ENCODE measurements at regions of chr1 and their contacts with region 1.

Region 1: GRCh38 chr1:109017134-109017533 is 24.8 kb downstream of the WDR47 start:
- DNase-seq: no peak
- H3K4me3 ChIP-seq: no peak overlapping the region
- H3K27ac ChIP-seq: no peak overlapping the region
- H3K4me1 ChIP-seq: no peaks in the 10 kb centered on the region
- H3K27me3 ChIP-seq: no peaks in the 10 kb centered on the region
- CTCF ChIP-seq: no peak
- EP300 ChIP-seq: no peak
- POLR2A ChIP-seq: no peak
- RAD21 ChIP-seq: no peak

Region 2: DNA sequence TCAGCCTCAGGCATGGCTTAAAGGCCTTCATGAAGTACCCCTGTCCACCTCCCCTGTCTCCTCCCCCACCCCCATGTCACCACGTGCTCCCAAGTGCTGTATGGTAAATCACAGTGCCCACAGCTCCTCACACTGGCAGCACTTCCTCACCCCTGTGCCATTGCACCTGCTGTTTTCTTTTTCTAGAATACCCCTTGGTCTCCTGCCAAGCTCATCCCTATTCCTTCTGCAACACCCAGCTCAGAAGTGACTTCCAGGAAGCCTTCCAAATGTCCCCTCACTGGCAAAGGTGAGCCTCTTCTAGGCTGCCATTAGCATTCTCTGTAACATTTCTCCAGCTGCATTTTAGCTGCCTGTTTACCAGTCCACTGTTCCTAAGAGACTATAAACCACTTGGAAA is 169.6 kb before region 1 on chr1:
- CTCF ChIA-PET with region 1: no interaction called
- POLR2A ChIA-PET with region 1: no interaction called
- DNase-seq: no peak
- H3K4me3 ChIP-seq: no peak overlapping the region
- H3K27ac ChIP-seq: no peak overlapping the region
- H3K4me1 ChIP-seq: peaks cover 0 to 1% (median 0%) of the 10 kb centered on the region in 4 experiments; a peak in 2 of 7 replicates
- H3K27me3 ChIP-seq: no peaks in the 10 kb centered on the region
- CTCF ChIP-seq: no peak
- EP300 ChIP-seq: no peak
- POLR2A ChIP-seq: no peak
- RAD21 ChIP-seq: no peak

Region 3: DNA sequence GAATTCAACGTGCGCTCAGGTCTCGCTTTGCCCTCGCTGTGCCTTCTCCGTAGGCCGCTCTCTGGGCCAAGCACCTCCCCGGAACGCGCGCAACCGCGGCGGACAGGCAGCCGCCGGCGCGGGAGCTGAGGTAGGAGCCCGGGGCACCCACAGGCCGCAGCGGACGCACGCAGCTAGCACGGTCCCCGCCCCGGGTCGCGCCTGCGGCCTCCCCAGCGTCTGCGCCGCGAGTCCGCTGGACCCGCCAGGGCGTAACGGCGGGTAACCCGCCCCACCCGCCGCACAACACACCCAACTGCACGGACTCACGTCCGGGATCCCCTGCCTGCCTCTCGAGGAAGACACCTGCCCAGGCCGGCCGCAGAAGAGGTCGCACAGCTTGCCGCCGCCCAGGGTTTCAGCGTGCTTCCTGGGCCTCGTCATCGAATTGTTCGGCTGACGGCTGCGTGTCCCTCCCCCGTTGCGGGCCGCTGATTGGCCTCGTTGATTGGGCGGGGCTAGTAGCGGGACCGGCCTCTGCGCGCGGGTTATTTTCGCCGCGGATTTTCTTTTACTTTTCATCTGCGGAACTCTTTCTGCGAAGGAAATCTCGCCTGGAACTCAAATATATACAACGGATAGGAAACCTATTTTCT is 54.0 kb before region 1 on chr1 and contains the start of gene CLCC1:
- CTCF ChIA-PET with region 1: no interaction called
- POLR2A ChIA-PET with region 1: no interaction called
- DNase-seq: peak; percentile 70 to 89
- H3K4me3 ChIP-seq: peak within 1 kb of the TSS; percentile 77 to 91 (median 82)
- H3K27ac ChIP-seq: peak within 1 kb of the TSS; percentile 63; the same call in 1 of the 2 replicates
- H3K4me1 ChIP-seq: no peaks in the 10 kb centered on the region; a peak in 2 of 7 replicates
- H3K27me3 ChIP-seq: no peaks in the 10 kb centered on the region
- CTCF ChIP-seq: no peak
- EP300 ChIP-seq: no peak
- POLR2A ChIP-seq: peak in 1 of 2 experiments; percentile 86; a peak in 2 of 3 replicates
- RAD21 ChIP-seq: no peak
- total RNA-seq, gene CLCC1: 20.6 and 23.8 TPM in 2 replicates

Region 4: GRCh38 chr1:109027841-109028240 is 10.7 kb after region 1 on chr1:
- CTCF ChIA-PET with region 1: interaction called, 11 read pairs
- POLR2A ChIA-PET with region 1: no interaction called
- DNase-seq: no peak
- H3K4me3 ChIP-seq: no peak overlapping the region
- H3K27ac ChIP-seq: no peak overlapping the region
- H3K4me1 ChIP-seq: no peaks in the 10 kb centered on the region
- H3K27me3 ChIP-seq: no peaks in the 10 kb centered on the region
- CTCF ChIP-seq: no peak
- EP300 ChIP-seq: no peak
- POLR2A ChIP-seq: no peak
- RAD21 ChIP-seq: no peak